ENCODE measurements at regions of chr11 and their contacts with region 1.

Region 1: DNA sequence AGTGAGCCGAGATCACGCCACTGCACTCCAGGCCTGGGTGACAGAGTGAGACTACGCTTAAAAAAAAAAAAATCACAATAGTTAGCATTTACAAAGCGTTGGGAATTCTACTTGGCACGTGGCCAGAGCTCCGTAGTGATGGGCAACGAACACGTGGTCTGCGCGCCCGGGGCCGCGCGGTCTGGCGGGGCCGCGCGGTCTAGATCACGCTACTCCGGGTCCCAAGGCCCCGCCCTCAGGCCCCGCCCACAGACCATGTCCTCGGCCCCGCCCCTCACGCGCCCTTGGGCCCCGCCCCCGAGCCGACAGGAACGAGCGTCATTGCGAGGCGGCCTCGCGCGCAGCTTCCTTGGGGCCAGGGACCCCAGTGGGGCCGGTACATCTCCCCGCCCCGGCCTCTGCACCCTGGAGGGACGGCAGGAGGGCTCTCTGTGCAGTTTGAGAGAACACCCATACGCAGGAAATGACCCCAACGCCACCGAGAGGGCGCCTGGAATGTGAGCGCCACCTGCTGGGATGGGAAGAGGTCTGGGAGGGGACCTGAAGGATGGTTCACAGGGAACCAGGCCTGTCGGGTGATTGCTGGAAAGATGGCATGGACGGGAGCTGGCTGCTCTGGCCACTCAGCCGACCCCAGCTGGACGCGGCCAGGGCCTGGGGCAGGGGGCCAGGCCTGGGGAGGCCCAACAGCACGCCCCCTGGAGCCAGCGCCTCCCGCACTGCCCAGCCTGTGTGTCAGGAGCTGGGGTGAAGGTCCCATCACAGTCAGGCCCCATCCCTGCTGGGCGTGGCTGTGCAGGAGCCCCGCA is 2.0 kb upstream of the PTDSS2 start:
- DNase-seq: peak; percentile 93
- H3K4me3 Mint-ChIP-seq: peak overlapping the region; percentile 87
- H3K27ac Mint-ChIP-seq: peak overlapping the region; percentile 83
- H3K4me1 Mint-ChIP-seq: peaks cover 18% of the 10 kb centered on the region
- H3K27me3 Mint-ChIP-seq: no peaks in the 10 kb centered on the region
- CTCF ChIP-seq: peak; percentile 89

Region 2: GRCh38 chr11:304915-305843 is 142.9 kb before region 1 on chr11:
- CTCF ChIA-PET with region 1: interaction called, 12 read pairs
- POLR2A ChIA-PET with region 1: interaction called, 3 read pairs
- intact Hi-C with region 1: loop called (anchors 2 kb)
- DNase-seq: peak; percentile 74
- H3K4me3 Mint-ChIP-seq: no peak overlapping the region
- H3K27ac Mint-ChIP-seq: no peak overlapping the region
- H3K4me1 Mint-ChIP-seq: peaks cover 20% of the 10 kb centered on the region
- H3K27me3 Mint-ChIP-seq: no peaks in the 10 kb centered on the region
- CTCF ChIP-seq: peak; percentile 58

Region 3: GRCh38 chr11:394034-394857 is 53.9 kb before region 1 on chr11 and contains the start of gene PKP3:
- CTCF ChIA-PET with region 1: interaction called, 5 read pairs
- POLR2A ChIA-PET with region 1: interaction called, 33 read pairs
- intact Hi-C with region 1: loop called (anchors 1 kb)
- DNase-seq: peak; percentile 94
- H3K4me3 Mint-ChIP-seq: peak within 1 kb of the TSS; percentile 96
- H3K27ac Mint-ChIP-seq: peak within 1 kb of the TSS; percentile 94
- H3K4me1 Mint-ChIP-seq: peaks cover 19% of the 10 kb centered on the region
- H3K27me3 Mint-ChIP-seq: no peaks in the 10 kb centered on the region
- CTCF ChIP-seq: no peak
- total RNA-seq, gene PKP3: 129 and 177 TPM in 2 replicates

Region 4: GRCh38 chr11:416757-417621 is 31.1 kb before region 1 on chr11:
- CTCF ChIA-PET with region 1: interaction called, 7 read pairs
- POLR2A ChIA-PET with region 1: interaction called, 11 read pairs
- intact Hi-C with region 1: no loop called
- DNase-seq: peak; percentile 39
- H3K4me3 Mint-ChIP-seq: peak overlapping the region; percentile 62
- H3K27ac Mint-ChIP-seq: peak overlapping the region; percentile 67
- H3K4me1 Mint-ChIP-seq: peaks cover 5% of the 10 kb centered on the region
- H3K27me3 Mint-ChIP-seq: no peaks in the 10 kb centered on the region
- CTCF ChIP-seq: no peak

Region 5: DNA sequence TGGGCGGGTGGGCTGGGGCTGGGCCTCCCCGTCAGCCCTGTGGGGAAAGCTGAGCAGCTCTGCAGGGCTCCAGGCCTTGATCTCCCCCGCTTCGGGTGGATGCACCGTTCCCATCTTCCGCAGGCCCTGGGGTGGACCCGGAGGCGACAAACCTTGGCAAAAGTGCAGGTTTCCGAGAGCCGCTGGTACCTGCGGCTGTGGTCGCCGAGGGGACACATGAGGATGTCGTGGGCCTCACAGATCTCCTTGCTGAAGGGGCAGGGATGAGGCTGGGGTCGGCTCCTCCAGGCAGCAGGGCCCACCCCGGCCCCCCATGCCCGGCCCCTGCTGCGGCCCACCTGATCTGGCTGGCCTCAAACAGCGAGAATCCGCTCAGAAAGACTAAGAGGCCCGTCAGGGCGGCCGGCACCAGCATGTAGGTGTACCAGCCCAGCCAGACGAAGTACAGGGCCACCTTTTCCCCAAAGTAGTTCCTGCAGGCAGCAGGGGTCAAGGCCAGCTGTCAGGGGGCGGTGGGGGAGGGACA is 18.1 kb before region 1 on chr11:
- CTCF ChIA-PET with region 1: no interaction called
- POLR2A ChIA-PET with region 1: no interaction called
- intact Hi-C with region 1: no loop called
- DNase-seq: no peak
- H3K4me3 Mint-ChIP-seq: no peak overlapping the region
- H3K27ac Mint-ChIP-seq: no peak overlapping the region
- H3K4me1 Mint-ChIP-seq: no peaks in the 10 kb centered on the region
- H3K27me3 Mint-ChIP-seq: no peaks in the 10 kb centered on the region
- CTCF ChIP-seq: no peak

Region 6: DNA sequence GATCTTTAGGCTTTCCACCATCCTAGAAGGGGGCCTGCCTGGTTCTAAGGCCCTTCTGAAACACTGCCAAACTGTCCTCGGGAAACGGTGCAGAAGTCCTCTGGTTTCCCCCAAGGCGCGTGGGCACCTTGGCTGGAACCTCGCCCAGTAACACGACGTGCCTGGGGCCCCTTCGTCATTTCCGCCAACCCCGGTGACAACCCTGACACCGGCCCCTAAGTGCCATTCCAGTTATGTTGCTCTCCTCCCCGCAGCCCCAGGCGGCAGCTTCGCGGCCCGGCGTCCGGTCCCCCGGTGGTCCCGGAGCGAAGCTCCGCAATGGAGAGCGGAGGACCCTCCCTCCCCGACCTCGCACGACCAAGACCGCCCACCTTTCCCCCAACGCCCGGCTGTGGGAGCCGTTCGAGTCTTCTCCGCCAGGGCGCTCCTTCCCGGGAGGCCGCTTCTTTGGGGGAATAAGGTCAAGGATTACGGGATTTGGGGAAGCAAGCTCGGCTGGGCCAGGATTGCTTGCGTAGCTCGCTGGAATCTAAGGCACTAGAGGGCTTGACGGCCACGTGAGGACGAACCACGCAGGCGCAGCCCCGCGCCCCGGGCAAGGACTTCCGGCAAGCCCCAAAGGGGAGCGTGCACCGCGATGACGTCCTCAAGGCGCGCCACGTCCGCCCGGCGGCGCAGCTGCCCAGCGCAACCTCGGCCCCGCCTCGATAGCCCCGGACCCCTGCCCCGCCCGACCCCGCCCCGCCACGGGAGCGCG is 58.3 kb after region 1 on chr11:
- CTCF ChIA-PET with region 1: interaction called, 33 read pairs
- POLR2A ChIA-PET with region 1: interaction called, 75 read pairs
- intact Hi-C with region 1: no loop called
- DNase-seq: peak; percentile 95
- H3K4me3 Mint-ChIP-seq: peak overlapping the region; percentile 95
- H3K27ac Mint-ChIP-seq: peak overlapping the region; percentile 99
- H3K4me1 Mint-ChIP-seq: peaks cover 6% of the 10 kb centered on the region
- H3K27me3 Mint-ChIP-seq: no peaks in the 10 kb centered on the region
- CTCF ChIP-seq: no peak

Region 7: DNA sequence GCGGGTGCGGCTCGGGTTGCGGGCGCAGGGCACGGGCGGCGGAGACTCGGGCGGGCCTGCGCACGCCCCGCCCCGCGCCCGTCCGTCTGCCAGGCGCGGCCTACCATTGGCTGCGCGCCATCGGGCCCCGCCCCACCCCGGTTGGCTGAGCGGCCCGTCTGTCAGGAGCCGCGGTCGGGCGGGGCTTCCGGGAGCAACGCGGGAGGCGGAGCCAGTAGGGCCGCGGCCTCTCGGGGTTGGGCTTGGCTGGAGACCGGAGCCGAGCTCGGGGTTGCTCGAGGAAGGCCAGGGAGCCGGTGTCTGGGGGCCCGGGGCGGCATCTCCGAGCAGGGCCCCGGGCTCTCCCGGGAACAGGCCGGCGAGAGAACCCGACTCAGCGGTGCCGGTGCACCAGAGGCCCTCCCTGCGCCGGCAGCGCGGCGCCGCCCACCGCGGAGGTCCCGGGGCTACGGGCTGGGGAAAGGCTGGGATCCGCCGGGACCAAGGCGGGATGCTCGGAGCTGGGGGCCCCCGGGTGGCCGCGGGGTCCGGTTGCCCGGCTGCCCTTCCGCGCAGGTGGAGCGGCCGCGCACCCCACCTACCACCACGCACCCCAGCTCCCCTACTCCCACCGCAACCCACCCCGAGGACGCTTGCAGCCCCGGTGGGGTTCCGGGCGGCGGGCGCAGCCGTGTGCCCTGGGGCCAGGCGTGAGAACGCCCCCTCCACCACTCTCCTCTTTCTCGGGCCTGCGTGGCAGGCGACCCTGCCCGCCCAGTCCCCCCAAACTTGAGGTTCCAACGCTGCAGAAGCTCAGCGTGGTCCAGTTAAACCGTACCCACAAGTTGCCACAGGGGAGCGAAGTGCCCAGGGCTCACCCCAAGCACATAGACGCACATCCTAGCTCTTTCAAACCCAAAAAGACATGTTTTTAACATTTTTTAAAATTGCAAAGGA is 87.7 kb after region 1 on chr11 and contains the start of gene HRAS:
- CTCF ChIA-PET with region 1: interaction called, 3 read pairs
- POLR2A ChIA-PET with region 1: interaction called, 10 read pairs
- intact Hi-C with region 1: no loop called
- DNase-seq: peak; percentile 92
- H3K4me3 Mint-ChIP-seq: peak within 1 kb of the TSS; percentile 76
- H3K27ac Mint-ChIP-seq: peak within 1 kb of the TSS; percentile 61
- H3K4me1 Mint-ChIP-seq: no peaks in the 10 kb centered on the region
- H3K27me3 Mint-ChIP-seq: no peaks in the 10 kb centered on the region
- CTCF ChIP-seq: no peak
- total RNA-seq, gene HRAS: 115 and 123 TPM in 2 replicates

Region 8: GRCh38 chr11:569158-569885 is 121.2 kb after region 1 on chr11:
- CTCF ChIA-PET with region 1: no interaction called
- POLR2A ChIA-PET with region 1: no interaction called
- intact Hi-C with region 1: no loop called
- DNase-seq: no peak
- H3K4me3 Mint-ChIP-seq: peak overlapping the region; percentile 63
- H3K27ac Mint-ChIP-seq: no peak overlapping the region
- H3K4me1 Mint-ChIP-seq: peaks cover 2% of the 10 kb centered on the region
- H3K27me3 Mint-ChIP-seq: no peaks in the 10 kb centered on the region
- CTCF ChIP-seq: no peak

Measured in MCF 10A (cell line).